Panc1 (cell line): ENCODE measurements at regions of chr15 and their contacts with region 1.

Region 1: DNA sequence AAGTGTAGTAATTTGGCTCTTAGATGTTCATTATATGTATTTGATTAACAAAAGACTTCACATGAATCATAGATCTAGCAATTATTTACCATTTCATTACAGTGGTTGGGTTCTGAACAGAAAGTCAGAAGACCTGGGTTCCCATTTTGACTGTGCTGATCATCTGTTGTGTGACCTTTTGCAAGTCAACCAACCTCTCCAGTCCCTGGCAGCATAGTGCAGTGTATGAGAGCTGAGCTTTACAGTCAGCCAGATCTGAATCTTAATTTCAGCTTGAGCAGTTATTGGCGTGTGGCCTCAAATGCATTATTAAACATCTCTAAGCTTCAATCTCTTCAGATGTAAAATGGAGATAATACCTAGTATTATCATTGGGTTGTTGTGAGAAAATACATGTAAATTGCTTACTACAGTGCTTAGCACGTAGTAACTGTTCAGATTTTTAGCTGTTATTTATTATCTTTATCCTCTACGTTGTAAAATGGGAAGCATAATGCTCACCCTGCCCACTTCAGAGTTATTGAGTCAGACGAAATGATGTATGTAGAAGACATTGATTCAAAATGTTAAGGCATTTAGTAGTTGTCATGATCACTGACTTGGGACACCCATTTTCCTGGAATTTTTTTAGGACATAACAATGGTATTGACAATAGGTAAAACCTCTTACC is 104.0 kb downstream of the KLHL25 start:
- DNase-seq: no peak
- ATAC-seq: no peak
- H3K4me3 ChIP-seq: no peak overlapping the region
- H3K27ac ChIP-seq: no peak overlapping the region
- H3K4me1 ChIP-seq: no peaks in the 10 kb centered on the region
- H3K27me3 ChIP-seq: no peaks in the 10 kb centered on the region
- CTCF ChIP-seq: no peak

Region 2: DNA sequence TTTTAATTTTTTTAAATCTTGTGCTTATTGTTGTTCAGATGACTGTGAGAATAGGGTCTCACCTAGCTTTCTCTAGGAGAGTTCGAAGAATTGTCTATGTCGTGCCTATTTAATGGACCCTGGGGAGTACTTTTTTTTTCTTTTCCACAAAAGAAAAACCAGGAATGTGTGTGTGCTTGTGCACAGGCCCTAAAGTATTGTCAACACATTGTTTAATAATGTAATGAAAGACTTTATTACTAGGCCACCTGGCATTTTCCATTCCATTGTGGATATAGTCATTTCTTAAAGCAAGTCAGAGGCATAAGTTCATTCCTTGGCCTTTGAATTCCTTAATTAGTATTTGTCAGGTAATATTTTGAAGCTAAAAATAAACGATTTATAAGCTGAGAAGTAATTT is 31.9 kb before region 1 on chr15:
- CTCF ChIA-PET with region 1: no interaction called
- POLR2A ChIA-PET with region 1: interaction called, 14 read pairs
- in situ Hi-C with region 1: no loop called
- intact Hi-C with region 1: no loop called
- DNase-seq: no peak
- ATAC-seq: no peak
- H3K4me3 ChIP-seq: no peak overlapping the region
- H3K27ac ChIP-seq: no peak overlapping the region
- H3K4me1 ChIP-seq: no peaks in the 10 kb centered on the region
- H3K27me3 ChIP-seq: no peaks in the 10 kb centered on the region
- CTCF ChIP-seq: no peak

Region 3: GRCh38 chr15:85672332-85673084 is 18.2 kb before region 1 on chr15:
- CTCF ChIA-PET with region 1: no interaction called
- POLR2A ChIA-PET with region 1: no interaction called
- in situ Hi-C with region 1: no loop called
- intact Hi-C with region 1: no loop called
- DNase-seq: no peak
- ATAC-seq: no peak
- H3K4me3 ChIP-seq: no peak overlapping the region
- H3K27ac ChIP-seq: no peak overlapping the region
- H3K4me1 ChIP-seq: no peaks in the 10 kb centered on the region
- H3K27me3 ChIP-seq: no peaks in the 10 kb centered on the region
- CTCF ChIP-seq: no peak

Region 4: DNA sequence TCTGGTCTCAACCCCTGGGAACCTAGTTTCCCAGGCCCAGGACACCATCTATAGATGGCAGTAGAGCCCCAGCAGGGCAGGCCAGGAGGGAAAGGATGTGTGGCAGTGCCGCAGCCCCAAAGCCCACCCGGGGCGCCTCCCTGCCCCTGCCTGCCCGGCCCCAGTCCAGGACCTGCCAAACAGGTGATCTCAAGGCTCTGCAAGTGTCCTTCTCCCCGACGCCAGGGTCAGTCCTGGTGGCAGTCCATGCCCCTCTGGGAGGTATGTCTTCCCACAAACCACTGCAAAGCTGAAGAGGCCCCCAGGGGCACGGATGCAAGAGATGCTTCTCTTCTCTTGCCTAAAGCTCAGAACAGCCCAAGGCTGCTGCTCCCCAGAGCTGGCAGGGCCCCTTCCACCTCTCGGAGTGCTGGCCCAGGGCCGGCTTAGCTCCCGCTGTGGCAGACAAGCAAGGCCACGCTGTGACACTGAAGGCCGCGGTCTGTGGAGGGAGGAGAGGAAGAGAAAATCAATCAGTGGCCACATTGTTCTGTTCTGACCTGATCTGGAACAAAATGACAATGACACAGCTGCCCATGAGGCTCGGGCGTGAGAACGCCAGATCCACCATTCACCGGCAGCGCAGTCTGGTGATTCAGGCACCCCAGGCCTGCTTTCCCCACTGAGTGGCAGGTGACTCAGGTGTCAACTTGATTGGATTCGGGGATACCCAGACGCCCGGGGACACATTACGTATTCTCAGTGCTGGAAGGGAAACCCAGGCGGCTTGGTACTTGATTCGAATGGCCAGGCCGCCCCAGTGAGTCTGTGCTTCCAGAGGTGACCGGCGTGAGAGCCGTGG is 70.1 kb after region 1 on chr15:
- CTCF ChIA-PET with region 1: no interaction called
- POLR2A ChIA-PET with region 1: no interaction called
- in situ Hi-C with region 1: no loop called
- intact Hi-C with region 1: no loop called
- DNase-seq: no peak
- ATAC-seq: peak; percentile 54; the same call in 1 of the 2 replicates
- H3K4me3 ChIP-seq: no peak overlapping the region
- H3K27ac ChIP-seq: no peak overlapping the region
- H3K4me1 ChIP-seq: peaks cover 5% of the 10 kb centered on the region; the same call in 1 of the 2 replicates
- H3K27me3 ChIP-seq: no peaks in the 10 kb centered on the region
- CTCF ChIP-seq: no peak; the same call in 1 of the 2 replicates